Tibial artery (tissue), 4 donors: ENCODE measurements at regions of chr6 and their contacts with region 1.

Region 1: DNA sequence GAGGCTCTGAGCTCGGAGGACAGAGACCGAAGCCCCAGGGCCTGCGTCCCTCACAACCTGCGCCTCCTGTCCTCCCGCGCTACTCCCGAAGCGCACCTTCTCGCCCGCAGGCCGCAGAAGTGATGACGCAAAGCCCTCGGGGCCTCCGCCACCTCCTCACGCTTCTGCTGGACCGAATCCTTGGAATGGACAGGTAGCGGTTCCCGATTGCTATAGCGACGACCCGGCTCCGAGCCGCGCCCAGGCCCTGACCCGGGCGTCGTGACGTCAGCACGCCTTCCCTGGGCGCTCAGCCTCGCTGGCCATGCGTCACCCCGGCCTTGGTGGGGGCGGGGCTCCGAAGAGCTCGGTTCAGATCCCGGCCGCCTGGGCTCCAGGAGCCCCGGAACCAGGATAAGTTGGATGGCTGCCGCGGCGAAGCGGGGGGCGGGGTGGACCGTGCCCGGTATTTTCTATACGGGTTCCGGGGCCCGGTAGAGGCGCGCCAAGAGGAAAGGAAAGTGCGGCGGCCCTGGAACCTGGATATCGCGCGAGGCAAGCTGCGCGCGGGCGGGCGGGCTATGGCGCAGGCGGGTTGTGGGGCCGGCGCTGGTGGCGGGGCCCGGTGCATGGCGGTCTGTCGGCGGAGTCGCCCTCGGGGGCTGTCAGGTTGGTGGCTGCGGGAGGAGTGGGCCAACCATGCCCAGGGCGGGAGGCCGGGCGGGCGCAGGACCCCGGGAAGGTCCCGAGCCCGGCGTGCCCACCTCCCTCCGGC is at the start of gene ZNF76:
- DNase-seq: peak; percentile 97 to 99
- H3K4me3 ChIP-seq: peak within 1 kb of the TSS; percentile 80 to 94
- H3K27ac ChIP-seq: peak within 1 kb of the TSS; percentile 98
- H3K4me1 ChIP-seq: peaks cover 0 to 65% (median 22%) of the 10 kb centered on the region in 4 donors
- H3K27me3 ChIP-seq: no peaks in the 10 kb centered on the region
- CTCF ChIP-seq: peak in 1 of 2 experiments; percentile 74

Region 2: DNA sequence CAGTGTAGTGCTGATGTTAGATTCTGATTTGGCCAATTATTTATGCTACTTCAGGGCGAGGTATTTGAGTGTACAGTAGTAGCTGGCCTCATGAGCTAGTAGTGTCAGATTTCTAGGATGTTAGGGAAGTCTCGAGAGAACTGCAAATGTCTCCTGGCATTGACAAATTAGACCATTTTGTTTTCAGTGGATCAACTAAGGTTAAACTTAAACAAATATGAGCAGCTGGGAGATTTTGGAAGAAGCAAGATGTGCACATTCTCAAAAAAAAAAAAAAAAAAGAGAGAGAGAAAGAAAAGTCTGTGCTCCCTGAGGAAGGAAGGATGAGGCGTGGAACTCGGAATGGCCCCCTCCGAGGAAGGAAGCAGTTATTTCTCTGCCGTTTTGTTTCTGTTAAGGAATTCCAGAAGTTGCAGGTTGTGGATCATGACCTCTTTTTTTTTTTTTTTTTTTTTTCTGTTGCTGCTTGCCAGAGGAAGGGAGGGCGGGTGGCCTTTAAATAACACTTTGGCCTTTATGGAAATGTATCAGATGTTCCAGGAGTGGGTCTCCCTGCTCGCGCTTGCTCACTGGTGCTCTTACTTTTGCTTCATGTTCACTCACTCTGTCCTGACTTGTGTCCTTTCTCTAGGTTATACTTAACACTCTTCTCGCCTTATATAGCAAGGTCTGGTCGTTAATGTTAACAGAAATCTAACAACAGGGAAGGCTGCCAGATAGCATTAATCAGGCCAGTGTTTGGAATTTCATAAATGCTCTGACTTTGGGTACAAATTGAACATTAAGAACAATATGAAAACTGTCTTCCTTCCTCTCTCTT is 242.7 kb before region 1 on chr6:
- intact Hi-C with region 1: loop called (anchors 10 kb)
- DNase-seq: peak in 1 of 2 donors; percentile 55
- H3K4me3 ChIP-seq: peak overlapping the region; percentile 61 to 68
- H3K27ac ChIP-seq: peak overlapping the region; percentile 92 to 96
- H3K4me1 ChIP-seq: peaks cover 0 to 59% (median 43%) of the 10 kb centered on the region in 4 donors
- H3K27me3 ChIP-seq: no peaks in the 10 kb centered on the region
- CTCF ChIP-seq: no peak